Aorta (tissue), 5 donors: ENCODE measurements at regions of chr5 and their contacts with region 1.

Region 1: DNA sequence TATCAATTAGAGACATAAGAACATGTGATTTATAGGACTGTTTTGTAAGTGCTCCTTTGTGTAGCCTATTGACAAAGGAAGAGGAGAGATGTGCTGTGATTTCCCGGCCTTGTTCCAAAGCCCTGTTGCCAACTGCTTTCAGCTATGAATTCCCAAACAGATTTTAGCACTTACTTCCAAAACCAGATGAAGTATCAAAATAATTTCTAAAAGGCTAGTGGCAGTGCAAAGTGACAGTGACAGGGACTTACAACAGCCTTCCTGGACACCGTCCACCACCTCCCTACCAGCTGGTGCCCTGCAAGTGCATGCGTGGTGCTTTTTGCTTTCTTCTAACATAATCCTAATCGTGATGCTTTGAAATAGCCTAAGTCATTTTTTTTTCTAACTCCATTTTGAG is 254.1 kb upstream of the ACTBL2 start:
- DNase-seq: no peak
- ATAC-seq: no peak
- H3K4me3 ChIP-seq: no peak overlapping the region
- H3K27ac ChIP-seq: no peak overlapping the region
- H3K4me1 ChIP-seq: no peaks in the 10 kb centered on the region
- H3K27me3 ChIP-seq: no peaks in the 10 kb centered on the region

Region 2: DNA sequence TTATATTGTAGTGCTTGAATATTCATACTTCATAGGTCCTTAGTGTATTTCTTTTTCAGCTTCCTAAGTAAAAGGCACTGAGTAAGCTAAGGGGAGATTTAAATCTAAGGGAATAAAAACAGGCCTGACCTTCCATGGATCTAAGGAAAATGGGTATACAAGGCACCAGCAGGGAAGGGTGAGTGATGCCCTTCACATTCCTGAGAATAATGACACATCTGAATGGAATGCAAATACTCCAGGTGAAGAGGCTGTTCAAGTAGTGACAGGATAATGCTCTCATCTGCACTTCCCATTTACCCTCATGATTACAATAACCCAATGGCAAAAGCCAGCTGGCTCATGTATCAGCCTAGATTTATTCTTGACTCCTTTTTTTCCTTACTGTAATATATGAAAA is 37.9 kb before region 1 on chr5:
- intact Hi-C with region 1: loop called in 1 of 2 experiments (anchors 5 kb)
- DNase-seq: no peak
- ATAC-seq: no peak
- H3K4me3 ChIP-seq: no peak overlapping the region
- H3K27ac ChIP-seq: no peak overlapping the region
- H3K4me1 ChIP-seq: peaks cover 5 to 6% of the 10 kb centered on the region in 2 donors
- H3K27me3 ChIP-seq: no peaks in the 10 kb centered on the region

Region 3: DNA sequence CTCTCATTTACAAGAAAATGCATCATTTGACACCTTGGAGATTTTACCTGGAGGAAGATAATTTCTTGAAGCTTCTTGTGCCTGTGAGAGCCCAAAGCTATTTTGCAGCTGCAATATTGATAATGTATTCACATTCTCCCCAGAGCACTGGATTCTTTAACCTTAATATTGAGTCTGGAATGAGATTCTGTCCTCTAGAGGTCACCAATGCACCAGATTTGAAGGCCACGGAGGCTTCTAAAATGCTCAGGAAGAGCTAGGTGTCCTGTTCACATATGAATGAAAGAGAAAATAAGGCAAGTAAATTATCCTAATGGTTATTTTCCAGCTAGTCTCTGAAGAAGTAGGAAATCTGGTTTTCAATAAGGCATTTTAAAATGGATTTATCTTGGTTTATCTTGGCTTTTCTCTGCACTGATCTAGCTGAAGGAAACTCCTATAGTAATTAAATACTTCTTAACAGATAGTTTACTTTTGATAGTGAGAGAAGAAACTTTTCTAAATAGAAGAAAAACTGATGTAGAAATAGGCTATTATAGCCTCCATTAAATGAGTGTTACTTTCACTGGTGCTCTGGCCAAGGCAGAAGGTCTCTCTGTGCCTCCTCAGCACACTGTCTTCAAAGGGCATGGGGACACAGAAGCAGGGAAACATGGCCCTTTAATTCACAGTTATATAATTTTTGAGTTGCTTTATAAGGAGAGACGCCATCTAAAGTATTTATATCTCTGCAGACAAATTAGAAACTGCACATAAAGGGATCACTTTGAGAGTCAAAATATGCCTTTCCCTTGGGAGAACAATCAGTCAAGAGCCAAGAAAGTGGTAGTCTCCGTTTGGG is 42.9 kb after region 1 on chr5:
- intact Hi-C with region 1: no loop called
- DNase-seq: no peak
- ATAC-seq: peak; percentile 81
- H3K4me3 ChIP-seq: no peak overlapping the region
- H3K27ac ChIP-seq: no peak overlapping the region
- H3K4me1 ChIP-seq: peaks cover 2 to 7% of the 10 kb centered on the region in 2 donors
- H3K27me3 ChIP-seq: no peaks in the 10 kb centered on the region

Region 4: GRCh38 chr5:57804007-57804444 is 67.3 kb after region 1 on chr5:
- intact Hi-C with region 1: no loop called
- DNase-seq: no peak
- ATAC-seq: no peak
- H3K4me3 ChIP-seq: no peak overlapping the region
- H3K27ac ChIP-seq: no peak overlapping the region
- H3K4me1 ChIP-seq: peaks cover 3 to 6% of the 10 kb centered on the region in 2 donors
- H3K27me3 ChIP-seq: no peaks in the 10 kb centered on the region